Right ventricle myocardium inferior (tissue), 1 donor: ENCODE measurements at regions of chr17 and their contacts with region 1.

Region 1: GRCh38 chr17:50297407-50297865 is 23.2 kb downstream of the TMEM92 start:
- DNase-seq: peak; percentile 88
- ATAC-seq: peak; percentile 86

Region 2: DNA sequence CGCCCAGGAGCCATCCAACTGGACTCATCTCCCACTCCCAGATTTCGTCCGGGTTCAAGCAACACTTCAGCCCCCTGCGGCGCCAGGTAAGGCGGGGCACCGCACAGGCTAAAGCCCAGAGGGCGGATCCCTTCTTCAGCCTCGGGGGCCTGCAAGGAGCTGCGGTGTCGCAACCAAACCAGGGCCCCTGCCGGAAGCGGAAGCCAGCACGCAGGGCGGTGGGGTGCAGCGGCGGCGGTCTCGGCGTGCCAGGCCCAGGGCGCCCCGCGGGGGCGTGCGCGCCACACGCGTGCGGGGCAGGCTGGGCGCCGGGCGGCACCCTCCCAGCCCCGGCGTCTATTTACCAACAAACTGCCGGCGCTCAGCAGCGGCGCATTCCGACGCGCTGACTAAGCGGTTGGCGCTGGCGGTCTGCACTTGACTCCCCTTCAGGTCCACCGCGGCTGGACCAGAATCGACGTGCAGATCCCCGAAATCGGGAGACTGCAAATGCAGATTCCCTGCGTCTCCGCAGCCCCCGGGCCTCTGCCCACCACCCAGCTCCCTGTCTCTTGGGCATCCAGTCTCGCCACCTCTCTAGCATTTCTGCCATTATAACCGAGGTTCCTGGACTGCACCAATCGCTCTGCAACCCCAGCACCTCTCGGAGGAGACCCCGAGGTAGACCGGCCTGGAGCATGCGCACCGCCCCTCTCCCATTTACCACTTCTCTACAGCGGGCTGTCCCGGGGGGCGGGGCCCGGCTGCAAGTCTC is 328.9 kb before region 1 on chr17:
- intact Hi-C with region 1: no loop called
- DNase-seq: peak; percentile 82
- ATAC-seq: peak; percentile 68

Region 3: DNA sequence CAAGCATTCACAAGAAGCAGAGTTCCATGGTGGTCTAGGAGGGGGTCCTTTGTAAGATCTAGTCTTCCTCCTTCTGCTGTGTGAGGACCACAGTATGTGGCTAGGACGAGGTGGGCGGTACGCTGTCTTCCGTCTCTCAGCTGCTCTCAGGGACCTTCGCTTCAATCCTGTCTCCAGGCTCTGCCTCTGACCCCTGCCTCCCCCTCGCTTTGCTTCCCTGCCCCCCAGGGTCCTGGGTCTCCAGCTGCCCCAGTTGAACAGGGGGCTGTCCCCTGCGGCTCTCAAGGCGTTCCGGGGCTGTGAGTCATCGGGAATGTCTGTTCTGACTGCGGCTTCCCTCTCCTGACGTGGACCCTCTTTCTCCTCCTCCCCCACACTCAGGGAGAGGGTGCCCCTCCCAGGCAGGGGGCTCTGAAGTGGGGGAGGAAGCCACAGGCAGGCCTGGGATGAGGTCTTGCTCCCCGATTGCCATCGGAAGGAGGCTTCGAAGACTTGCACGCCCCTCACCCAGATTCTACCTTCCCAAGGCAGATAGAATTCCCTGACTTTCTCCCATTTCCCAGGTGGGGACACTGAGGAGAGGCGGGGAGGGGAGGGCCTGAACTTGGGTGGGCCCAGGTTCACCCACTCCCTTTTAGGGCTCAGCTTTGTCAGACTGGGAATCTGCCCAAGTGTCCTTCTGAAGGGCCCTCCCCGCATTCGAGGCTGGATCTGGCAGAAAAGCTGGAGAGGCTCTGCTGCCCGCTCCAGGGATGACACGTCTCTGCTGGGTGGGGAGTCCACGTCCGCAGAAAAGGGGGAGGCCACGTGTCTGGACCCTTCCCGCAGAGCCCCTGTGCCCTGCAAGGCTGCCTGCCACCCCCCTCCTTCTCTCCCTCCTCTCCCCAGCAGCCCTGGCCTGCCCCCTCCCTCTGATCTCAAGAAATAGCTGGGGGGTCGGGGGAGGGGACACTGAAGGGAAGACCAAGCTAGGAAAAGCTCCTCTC is 86.9 kb before region 1 on chr17:
- intact Hi-C with region 1: no loop called
- DNase-seq: peak; percentile 79
- ATAC-seq: peak; percentile 35

Region 4: GRCh38 chr17:50255766-50256635 is 41.4 kb before region 1 on chr17:
- intact Hi-C with region 1: loop called (anchors 1 kb)
- DNase-seq: no peak
- ATAC-seq: peak; percentile 6

Region 5: GRCh38 chr17:50440172-50440837 is 142.9 kb after region 1 on chr17:
- intact Hi-C with region 1: no loop called
- DNase-seq: no peak
- ATAC-seq: no peak